WTC11 (cell line): ENCODE measurements at regions of chr12 and their contacts with region 1.

Region 1: GRCh38 chr12:6867413-6868210 is at the start of gene TPI1:
- DNase-seq: peak; percentile 79
- ATAC-seq: peak; percentile 63
- H3K4me3 Mint-ChIP-seq: peak within 1 kb of the TSS; percentile 89
- H3K27ac Mint-ChIP-seq: peak within 1 kb of the TSS; percentile 87
- H3K4me1 Mint-ChIP-seq: peaks cover 60% of the 10 kb centered on the region
- H3K27me3 Mint-ChIP-seq: no peaks in the 10 kb centered on the region
- CTCF ChIP-seq: no peak
- total RNA-seq, gene TPI1: 1,045 to 1,242 TPM (median 1,195 TPM) in 3 replicates

Region 2: DNA sequence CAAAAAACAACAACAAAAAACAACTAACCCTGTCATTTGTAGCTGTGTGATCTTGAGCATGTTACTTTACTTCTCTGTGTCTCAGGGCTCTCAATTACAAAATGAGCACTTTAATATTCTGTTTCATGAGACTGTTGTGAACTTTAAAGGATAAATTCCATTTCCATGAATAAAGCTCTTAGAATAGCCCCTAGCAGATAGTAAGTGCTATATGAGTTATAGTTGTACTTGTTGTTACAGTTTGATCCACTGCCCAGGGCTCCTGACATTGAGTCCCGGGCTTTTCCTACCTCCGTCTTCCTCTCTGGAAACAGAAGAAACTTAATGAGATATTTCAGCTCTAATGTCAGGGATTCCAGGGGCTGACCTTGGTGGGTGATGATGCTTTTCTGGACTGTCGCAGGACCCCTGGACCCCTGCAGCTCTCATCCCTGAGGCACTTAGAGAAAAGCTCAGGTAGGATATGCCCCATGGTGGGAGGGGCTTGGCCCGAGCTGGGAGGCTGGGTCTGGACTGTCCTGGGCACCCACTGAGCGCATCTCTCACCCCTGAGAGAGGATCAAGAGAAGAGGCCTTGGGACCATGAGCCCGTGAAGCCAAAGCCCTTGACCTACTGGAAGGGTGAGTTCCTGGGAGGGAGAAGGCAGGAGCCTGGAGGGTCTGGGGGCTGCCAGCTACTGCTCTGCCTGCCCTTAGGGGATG is 34.3 kb before region 1 on chr12:
- CTCF ChIA-PET with region 1: interaction called, 15 read pairs
- POLR2A ChIA-PET with region 1: interaction called, 3 read pairs
- DNase-seq: no peak
- ATAC-seq: no peak
- H3K4me3 Mint-ChIP-seq: no peak overlapping the region
- H3K27ac Mint-ChIP-seq: no peak overlapping the region
- H3K4me1 Mint-ChIP-seq: peaks cover 18% of the 10 kb centered on the region
- H3K27me3 Mint-ChIP-seq: no peaks in the 10 kb centered on the region
- CTCF ChIP-seq: no peak

Region 3: GRCh38 chr12:6904280-6905278 is 37.0 kb after region 1 on chr12 and contains the start of gene LRRC23:
- CTCF ChIA-PET with region 1: interaction called, 45 read pairs
- POLR2A ChIA-PET with region 1: interaction called, 12 read pairs
- DNase-seq: peak; percentile 100
- ATAC-seq: peak; percentile 96
- H3K4me3 Mint-ChIP-seq: no peak within 1 kb of the TSS
- H3K27ac Mint-ChIP-seq: no peak within 1 kb of the TSS; the same call in 1 of the 2 replicates
- H3K4me1 Mint-ChIP-seq: peaks cover 10% of the 10 kb centered on the region
- H3K27me3 Mint-ChIP-seq: peaks cover 6% of the 10 kb centered on the region; the same call in 1 of the 2 replicates
- CTCF ChIP-seq: no peak
- total RNA-seq, gene LRRC23: 3.1 to 5.3 TPM (median 4.9 TPM) in 3 replicates

Region 4: GRCh38 chr12:6927379-6928024 is 59.9 kb after region 1 on chr12 and contains the start of gene ATN1:
- CTCF ChIA-PET with region 1: interaction called, 81 read pairs
- POLR2A ChIA-PET with region 1: interaction called, 33 read pairs
- DNase-seq: peak; percentile 86
- ATAC-seq: peak; percentile 19
- H3K4me3 Mint-ChIP-seq: peak within 1 kb of the TSS; percentile 94
- H3K27ac Mint-ChIP-seq: peak within 1 kb of the TSS; percentile 98
- H3K4me1 Mint-ChIP-seq: peaks cover 58% of the 10 kb centered on the region
- H3K27me3 Mint-ChIP-seq: no peaks in the 10 kb centered on the region
- CTCF ChIP-seq: no peak
- total RNA-seq, gene ATN1: 80.0 to 87.1 TPM (median 80.5 TPM) in 3 replicates

Region 5: DNA sequence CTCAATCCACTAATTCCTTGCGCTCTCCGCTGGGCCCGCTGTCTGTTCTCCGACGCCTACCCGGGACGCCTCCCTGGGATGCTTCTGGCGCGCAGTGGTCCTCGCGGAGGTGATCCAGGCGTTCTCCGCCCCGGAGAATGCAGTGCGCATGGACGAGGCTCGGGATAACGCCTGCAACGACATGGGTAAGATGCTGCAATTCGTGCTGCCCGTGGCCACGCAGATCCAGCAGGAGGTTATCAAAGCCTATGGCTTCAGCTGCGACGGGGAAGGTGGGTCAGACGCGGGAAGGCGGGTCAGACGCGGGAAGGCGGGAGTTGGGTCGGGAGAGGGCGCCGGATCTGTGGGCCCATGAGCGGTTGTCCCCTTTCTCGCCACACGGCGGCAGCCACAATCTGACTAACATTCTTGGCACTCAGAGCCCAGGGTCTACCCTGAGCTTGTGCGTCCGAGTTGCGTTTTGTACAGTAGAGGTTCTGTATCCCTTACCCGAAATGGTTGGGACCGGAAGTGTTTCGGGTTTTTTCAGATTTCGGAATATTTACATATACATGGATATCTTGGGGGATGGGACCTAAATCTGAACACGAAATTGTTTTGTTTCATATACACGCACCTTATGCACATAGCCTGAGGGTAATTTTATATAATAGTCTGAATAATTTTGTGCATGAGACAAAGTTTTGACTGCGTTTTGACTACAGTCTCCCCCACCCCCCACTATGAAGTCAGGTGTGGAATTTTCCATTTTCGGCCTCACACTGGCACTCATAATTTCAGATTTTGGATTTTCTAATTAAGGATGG is 77.0 kb after region 1 on chr12:
- CTCF ChIA-PET with region 1: interaction called, 53 read pairs
- POLR2A ChIA-PET with region 1: interaction called, 38 read pairs
- DNase-seq: peak; percentile 92
- ATAC-seq: peak; percentile 25
- H3K4me3 Mint-ChIP-seq: peak overlapping the region; percentile 98
- H3K27ac Mint-ChIP-seq: peak overlapping the region; percentile 99
- H3K4me1 Mint-ChIP-seq: peaks cover 34% of the 10 kb centered on the region
- H3K27me3 Mint-ChIP-seq: no peaks in the 10 kb centered on the region
- CTCF ChIP-seq: no peak

Region 6: GRCh38 chr12:6987948-6988553 is 120.4 kb after region 1 on chr12:
- CTCF ChIA-PET with region 1: no interaction called
- POLR2A ChIA-PET with region 1: no interaction called
- DNase-seq: no peak
- ATAC-seq: no peak
- H3K4me3 Mint-ChIP-seq: no peak overlapping the region
- H3K27ac Mint-ChIP-seq: peak overlapping the region; percentile 32
- H3K4me1 Mint-ChIP-seq: peaks cover under 1% of the 10 kb centered on the region
- H3K27me3 Mint-ChIP-seq: no peaks in the 10 kb centered on the region
- CTCF ChIP-seq: no peak